Activated CD4-positive, alpha-beta T cell treated with anti-CD3 and anti-CD28 coated beads for 36 hours (primary cell): ENCODE measurements at regions of chr11 and their contacts with region 1.

Region 1: DNA sequence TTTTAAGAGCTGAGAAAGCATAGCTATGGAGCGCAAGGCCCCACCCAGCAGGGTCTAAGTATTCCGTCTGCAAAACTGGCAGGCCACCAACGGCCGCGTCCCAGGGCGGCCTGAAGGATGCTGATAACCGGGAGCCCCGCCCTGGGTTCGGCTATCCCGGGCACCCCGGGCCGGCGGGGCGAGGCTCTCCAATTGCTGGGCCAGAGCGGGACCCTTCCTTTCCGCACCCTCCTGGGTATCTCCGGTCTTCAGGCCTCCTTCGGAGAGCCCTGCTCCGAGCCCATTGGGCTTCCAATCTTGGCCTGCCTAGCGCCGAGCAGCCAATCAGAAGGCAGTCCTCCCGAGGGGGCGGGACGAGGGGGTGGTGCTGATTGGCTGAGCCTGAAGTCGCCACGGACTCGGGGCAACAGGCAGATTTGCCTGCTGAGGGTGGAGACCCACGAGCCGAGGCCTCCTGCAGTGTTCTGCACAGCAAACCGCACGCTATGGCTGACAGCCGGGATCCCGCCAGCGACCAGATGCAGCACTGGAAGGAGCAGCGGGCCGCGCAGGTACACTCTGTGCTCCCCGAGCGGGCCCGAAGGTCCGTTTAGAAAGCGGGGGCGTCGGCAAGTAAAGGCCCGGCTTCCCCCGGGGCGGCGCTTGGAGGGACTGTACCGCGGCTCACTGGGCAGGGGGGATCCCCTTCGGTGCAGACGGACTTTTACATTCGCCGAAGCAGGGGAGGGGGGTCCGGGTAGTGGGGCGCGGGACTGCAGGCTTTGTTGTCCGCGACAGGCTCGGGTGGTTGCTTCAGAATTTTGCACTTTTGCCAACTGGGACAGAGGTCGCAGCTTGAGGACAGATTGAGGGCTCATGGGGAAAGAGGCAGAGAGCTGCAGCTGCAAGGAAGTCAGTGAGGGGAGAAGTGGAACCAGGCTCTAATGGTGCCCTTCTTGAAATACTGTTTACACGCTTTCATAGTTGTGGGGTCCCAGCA is at the start of gene CAT:
- DNase-seq: peak; percentile 99
- ATAC-seq: peak; percentile 99
- H3K4me3 Mint-ChIP-seq: peak within 1 kb of the TSS; percentile 86
- H3K27ac Mint-ChIP-seq: peak within 1 kb of the TSS; percentile 93
- H3K4me1 Mint-ChIP-seq: peaks cover 22% of the 10 kb centered on the region
- H3K27me3 Mint-ChIP-seq: no peaks in the 10 kb centered on the region
- total RNA-seq, gene CAT: 25.1 to 25.5 TPM

Region 2: GRCh38 chr11:33475993-33476392 is 962.8 kb before region 1 on chr11:
- CTCF ChIA-PET with region 1: no interaction called
- POLR2A ChIA-PET with region 1: no interaction called
- intact Hi-C with region 1: no loop called
- DNase-seq: no peak
- ATAC-seq: no peak
- H3K4me3 Mint-ChIP-seq: no peak overlapping the region
- H3K27ac Mint-ChIP-seq: no peak overlapping the region
- H3K4me1 Mint-ChIP-seq: no peaks in the 10 kb centered on the region
- H3K27me3 Mint-ChIP-seq: peaks cover 12% of the 10 kb centered on the region

Region 3: GRCh38 chr11:33773987-33774735 is 664.7 kb before region 1 on chr11 and contains the start of gene FBXO3:
- CTCF ChIA-PET with region 1: no interaction called
- POLR2A ChIA-PET with region 1: no interaction called
- intact Hi-C with region 1: loop called in 1 of 2 experiments (anchors 1 kb)
- DNase-seq: peak; percentile 87
- ATAC-seq: peak; percentile 85
- H3K4me3 Mint-ChIP-seq: peak within 1 kb of the TSS; percentile 89
- H3K27ac Mint-ChIP-seq: peak within 1 kb of the TSS; percentile 75
- H3K4me1 Mint-ChIP-seq: peaks cover 44% of the 10 kb centered on the region
- H3K27me3 Mint-ChIP-seq: peaks cover 12% of the 10 kb centered on the region
- total RNA-seq, gene FBXO3: 11.4 to 12.2 TPM

Region 4: GRCh38 chr11:34075178-34075820 is 363.5 kb before region 1 on chr11:
- CTCF ChIA-PET with region 1: no interaction called
- POLR2A ChIA-PET with region 1: no interaction called
- intact Hi-C with region 1: no loop called
- DNase-seq: no peak
- ATAC-seq: no peak
- H3K4me3 Mint-ChIP-seq: no peak overlapping the region
- H3K27ac Mint-ChIP-seq: peak overlapping the region; percentile 11
- H3K4me1 Mint-ChIP-seq: peaks cover 33% of the 10 kb centered on the region
- H3K27me3 Mint-ChIP-seq: no peaks in the 10 kb centered on the region

Region 5: DNA sequence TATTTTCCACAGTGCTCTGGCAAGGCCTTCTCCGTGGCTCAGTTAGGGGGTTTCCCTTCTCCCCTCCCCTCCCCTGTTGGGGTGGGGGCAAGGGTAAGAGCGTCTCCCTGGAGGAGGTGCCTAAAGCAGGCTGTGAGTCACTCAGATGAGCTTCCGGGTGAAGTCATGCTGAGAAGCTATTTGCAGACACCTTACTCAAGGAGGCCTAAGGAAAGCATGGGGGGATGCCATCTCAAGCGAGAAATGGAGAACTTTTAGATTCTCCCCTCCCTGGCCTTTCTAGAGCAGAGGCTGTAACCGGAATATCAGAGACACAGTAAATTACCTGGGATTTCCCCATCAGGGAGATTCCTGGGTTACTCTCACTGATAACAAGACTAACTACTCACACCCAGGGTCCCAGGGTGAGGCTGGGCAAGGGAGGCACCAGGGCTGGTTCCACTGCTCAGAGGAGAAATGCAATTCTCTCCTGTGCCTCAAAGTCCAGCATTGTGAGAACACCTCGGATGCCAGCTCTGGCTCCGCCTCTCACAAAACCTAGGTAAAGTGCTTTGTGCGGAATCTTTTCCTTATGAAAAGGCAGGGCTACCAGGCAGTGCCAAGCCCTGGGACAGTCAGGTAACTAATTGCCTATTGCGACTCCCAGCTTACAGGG is 204.6 kb before region 1 on chr11:
- CTCF ChIA-PET with region 1: no interaction called
- POLR2A ChIA-PET with region 1: no interaction called
- intact Hi-C with region 1: loop called in 1 of 2 experiments (anchors 2 kb)
- DNase-seq: peak; percentile 89
- ATAC-seq: peak; percentile 93
- H3K4me3 Mint-ChIP-seq: peak overlapping the region; percentile 16
- H3K27ac Mint-ChIP-seq: peak overlapping the region; percentile 72
- H3K4me1 Mint-ChIP-seq: peaks cover 44% of the 10 kb centered on the region
- H3K27me3 Mint-ChIP-seq: peaks cover 3% of the 10 kb centered on the region

Region 6: DNA sequence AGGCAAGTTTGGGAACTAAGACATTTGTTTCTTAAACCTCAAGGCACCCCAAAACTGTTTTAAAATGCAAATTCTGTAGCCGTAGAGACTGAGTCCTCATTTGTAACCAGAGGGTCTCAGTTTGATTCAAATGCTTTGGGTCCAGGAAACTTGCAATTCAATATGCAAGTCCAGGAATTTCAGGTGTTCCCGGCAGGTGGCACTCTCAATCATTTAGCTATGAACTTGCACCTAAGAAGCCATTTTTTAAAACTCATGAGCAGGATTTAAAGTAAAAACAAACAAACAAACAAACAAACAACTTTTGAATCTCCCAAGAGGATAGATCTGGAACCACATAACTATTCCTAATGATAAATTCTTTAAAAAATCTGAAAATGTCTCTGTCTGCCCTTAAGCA is 72.3 kb before region 1 on chr11:
- CTCF ChIA-PET with region 1: interaction called, 3 read pairs
- POLR2A ChIA-PET with region 1: interaction called, 3 read pairs
- intact Hi-C with region 1: loop called (anchors 1 to 2 kb)
- DNase-seq: peak; percentile 46
- ATAC-seq: no peak
- H3K4me3 Mint-ChIP-seq: no peak overlapping the region
- H3K27ac Mint-ChIP-seq: no peak overlapping the region
- H3K4me1 Mint-ChIP-seq: peaks cover 13% of the 10 kb centered on the region
- H3K27me3 Mint-ChIP-seq: peaks cover 10% of the 10 kb centered on the region

Region 7: GRCh38 chr11:34468209-34468841 is 29.5 kb after region 1 on chr11:
- CTCF ChIA-PET with region 1: interaction called, 4 read pairs
- POLR2A ChIA-PET with region 1: no interaction called
- intact Hi-C with region 1: loop called (anchors 1 to 2 kb)
- DNase-seq: peak; percentile 68
- ATAC-seq: peak; percentile 66
- H3K4me3 Mint-ChIP-seq: no peak overlapping the region
- H3K27ac Mint-ChIP-seq: no peak overlapping the region
- H3K4me1 Mint-ChIP-seq: peaks cover 4% of the 10 kb centered on the region
- H3K27me3 Mint-ChIP-seq: no peaks in the 10 kb centered on the region

Region 8: GRCh38 chr11:34585735-34586487 is 147.1 kb after region 1 on chr11:
- CTCF ChIA-PET with region 1: no interaction called
- POLR2A ChIA-PET with region 1: no interaction called
- intact Hi-C with region 1: no loop called
- DNase-seq: no peak
- ATAC-seq: no peak
- H3K4me3 Mint-ChIP-seq: no peak overlapping the region
- H3K27ac Mint-ChIP-seq: no peak overlapping the region
- H3K4me1 Mint-ChIP-seq: peaks cover 4% of the 10 kb centered on the region
- H3K27me3 Mint-ChIP-seq: peaks cover 30% of the 10 kb centered on the region